CD8-positive, alpha-beta memory T cell (primary cell): ENCODE measurements at regions of chr22 and their contacts with region 1.

Region 1: GRCh38 chr22:21938071-21938822 is 14.4 kb downstream of the PPM1F start:
- DNase-seq: peak; percentile 83 to 91 (median 87)
- H3K4me3 ChIP-seq: peak overlapping the region; percentile 91
- H3K4me3 Mint-ChIP-seq: peak overlapping the region; percentile 83 to 92 (median 87)
- H3K27ac ChIP-seq: peak overlapping the region; percentile 88
- H3K27ac Mint-ChIP-seq: peak overlapping the region; percentile 78 to 97 (median 86)
- H3K4me1 ChIP-seq: peaks cover 16% of the 10 kb centered on the region
- H3K4me1 Mint-ChIP-seq: peaks cover 24 to 40% (median 27%) of the 10 kb centered on the region in 3 donors
- H3K27me3 ChIP-seq: no peaks in the 10 kb centered on the region
- H3K27me3 Mint-ChIP-seq: peaks cover 0 to 3% of the 10 kb centered on the region in 2 donors

Region 2: DNA sequence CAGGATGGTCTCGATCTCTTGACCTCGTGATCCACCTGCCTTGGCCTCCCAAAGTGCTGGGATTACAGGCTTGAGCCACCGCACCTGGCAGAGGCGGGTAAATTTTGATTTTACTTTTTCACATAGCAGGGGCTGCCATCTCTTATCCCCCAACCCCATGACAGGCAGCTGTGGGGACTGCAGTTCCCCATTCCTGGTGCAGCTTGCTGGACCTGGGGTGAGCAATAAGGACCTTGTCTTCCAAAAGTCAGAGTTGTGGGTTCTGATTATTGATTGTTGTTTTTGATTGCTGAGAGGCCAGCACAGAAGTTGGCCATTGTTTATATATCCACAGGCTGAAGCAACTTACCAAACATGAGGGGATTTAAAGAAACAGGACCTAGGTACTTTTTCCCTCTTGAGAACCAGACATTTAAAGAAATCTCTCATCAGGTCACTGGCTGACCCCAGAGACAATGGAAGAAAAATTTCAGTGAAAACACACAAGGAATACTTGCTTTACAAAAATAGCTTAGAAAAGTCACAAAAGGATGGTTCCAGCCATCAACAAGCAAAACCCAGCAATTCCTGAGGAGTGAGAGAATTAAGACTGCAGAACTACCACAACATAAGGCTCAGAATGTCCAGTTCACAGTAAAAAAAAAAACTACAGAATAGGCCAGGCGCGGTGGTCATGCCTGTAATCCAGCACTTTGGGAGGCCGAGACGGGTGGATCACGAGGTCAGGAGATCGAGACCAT is 48.8 kb before region 1 on chr22:
- CTCF ChIA-PET with region 1: no interaction called
- POLR2A ChIA-PET with region 1: no interaction called
- DNase-seq: no peak
- H3K4me3 ChIP-seq: no peak overlapping the region
- H3K4me3 Mint-ChIP-seq: no peak overlapping the region
- H3K27ac ChIP-seq: no peak overlapping the region
- H3K27ac Mint-ChIP-seq: peak overlapping the region in 1 of 8 donors; percentile 87
- H3K4me1 ChIP-seq: no peaks in the 10 kb centered on the region
- H3K4me1 Mint-ChIP-seq: no peaks in the 10 kb centered on the region
- H3K27me3 ChIP-seq: no peaks in the 10 kb centered on the region
- H3K27me3 Mint-ChIP-seq: peaks cover 0 to 3% of the 10 kb centered on the region in 2 donors

Region 3: DNA sequence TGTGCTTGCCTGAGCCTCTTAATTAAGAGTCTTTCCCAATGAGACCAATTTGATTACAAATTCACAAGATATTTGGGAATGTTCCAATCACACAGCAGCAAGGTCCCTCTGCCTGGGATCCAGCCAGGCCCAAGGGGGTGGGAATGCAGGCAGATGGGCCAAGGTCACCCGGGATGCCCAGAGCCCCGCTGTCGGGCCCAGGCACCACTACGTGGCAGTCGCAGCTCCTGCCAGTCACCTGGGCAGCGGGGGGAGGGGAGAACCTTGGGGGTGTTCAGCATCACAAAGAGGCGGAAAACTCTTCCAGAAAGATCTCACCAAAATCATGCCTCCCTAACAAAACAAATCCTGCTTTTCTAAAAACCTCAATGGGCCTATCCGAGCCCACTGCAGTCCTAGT is 16.5 kb before region 1 on chr22:
- CTCF ChIA-PET with region 1: interaction called, 15 read pairs
- POLR2A ChIA-PET with region 1: interaction called, 5 read pairs
- DNase-seq: no peak
- H3K4me3 ChIP-seq: no peak overlapping the region
- H3K4me3 Mint-ChIP-seq: no peak overlapping the region
- H3K27ac ChIP-seq: no peak overlapping the region
- H3K27ac Mint-ChIP-seq: no peak overlapping the region
- H3K4me1 ChIP-seq: no peaks in the 10 kb centered on the region
- H3K4me1 Mint-ChIP-seq: no peaks in the 10 kb centered on the region
- H3K27me3 ChIP-seq: no peaks in the 10 kb centered on the region
- H3K27me3 Mint-ChIP-seq: no peaks in the 10 kb centered on the region

Region 4: DNA sequence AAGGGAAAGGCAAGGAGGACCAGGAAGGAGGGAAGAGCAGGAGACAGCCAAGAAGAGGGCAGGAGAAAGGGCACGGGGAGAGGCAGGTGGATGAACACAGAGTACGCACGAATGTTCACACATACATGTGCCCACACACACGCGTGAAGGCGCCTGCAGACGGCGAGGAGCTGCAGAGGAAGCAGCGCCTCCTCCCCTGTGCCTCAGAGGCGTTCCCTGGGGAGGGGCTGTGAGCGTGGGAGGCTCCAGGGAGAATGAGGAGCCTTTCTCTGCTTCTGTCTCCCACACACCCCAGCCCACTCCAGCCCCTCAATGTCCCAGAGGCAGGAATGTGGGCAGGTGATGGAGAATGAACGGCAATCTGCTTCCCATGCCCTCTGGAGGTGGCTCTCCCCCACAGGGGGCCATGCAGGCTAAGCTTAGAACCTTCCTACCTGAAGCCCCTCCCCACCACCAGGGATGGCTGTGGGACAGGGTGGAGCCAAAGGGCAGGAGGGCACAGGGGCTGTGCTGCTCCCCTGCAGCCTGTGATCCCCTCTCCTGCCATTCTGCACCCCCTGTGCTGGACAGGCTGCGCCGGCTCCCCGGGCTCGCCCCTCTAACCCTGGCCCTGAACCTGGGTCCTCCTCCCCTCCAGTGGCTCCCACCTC is 10.9 kb before region 1 on chr22:
- CTCF ChIA-PET with region 1: interaction called, 15 read pairs
- POLR2A ChIA-PET with region 1: no interaction called
- DNase-seq: no peak
- H3K4me3 ChIP-seq: no peak overlapping the region
- H3K4me3 Mint-ChIP-seq: no peak overlapping the region
- H3K27ac ChIP-seq: no peak overlapping the region
- H3K27ac Mint-ChIP-seq: no peak overlapping the region
- H3K4me1 ChIP-seq: no peaks in the 10 kb centered on the region
- H3K4me1 Mint-ChIP-seq: no peaks in the 10 kb centered on the region
- H3K27me3 ChIP-seq: no peaks in the 10 kb centered on the region
- H3K27me3 Mint-ChIP-seq: no peaks in the 10 kb centered on the region

Region 5: DNA sequence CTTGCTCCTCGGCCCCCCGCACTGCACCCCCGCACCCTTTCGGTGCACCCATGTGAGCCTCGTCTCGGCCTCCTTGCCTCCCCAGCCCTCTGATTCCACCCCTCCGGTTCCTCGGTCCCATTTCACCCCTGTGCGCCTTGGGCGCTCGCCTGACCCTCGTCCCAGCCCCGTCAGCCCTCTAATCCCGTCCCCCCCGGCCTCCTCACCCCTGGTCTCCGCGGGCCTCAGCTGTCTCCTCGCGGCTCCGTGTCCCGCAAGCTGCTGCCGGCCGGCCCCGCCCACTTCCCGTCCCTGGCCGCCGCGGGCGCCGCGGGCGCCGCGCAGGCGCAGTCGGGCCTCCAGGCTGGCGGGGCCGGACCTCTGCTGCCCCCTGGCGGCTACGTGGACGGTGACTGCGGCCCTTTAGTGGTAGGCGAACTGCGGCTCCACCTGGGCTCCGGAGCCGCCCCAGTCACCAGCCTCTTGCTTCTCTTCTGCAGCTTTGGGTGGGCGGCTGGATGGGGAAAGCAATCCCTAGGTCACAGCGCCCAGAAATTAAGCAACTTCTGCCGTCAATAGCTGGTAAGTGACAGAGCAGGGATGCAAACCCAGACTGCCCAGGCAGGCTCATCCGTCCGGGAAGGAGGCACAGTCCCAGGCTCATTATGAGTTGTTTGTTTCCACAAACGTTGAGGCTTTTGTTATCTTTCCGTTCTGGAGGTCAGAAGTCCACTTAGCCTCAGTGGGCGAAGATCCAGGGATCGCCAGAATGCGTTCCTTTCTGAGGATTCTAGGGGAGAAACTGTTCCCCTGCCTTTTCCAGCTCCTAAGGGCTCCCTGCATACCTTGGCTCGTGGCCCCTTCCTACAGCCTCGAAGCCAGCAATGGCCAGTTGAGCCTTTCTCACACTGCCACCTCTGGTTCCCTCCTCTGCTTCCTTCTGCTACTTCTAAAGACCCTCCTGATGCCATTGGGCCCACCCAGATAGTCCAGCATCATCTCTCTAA is 14.6 kb after region 1 on chr22 and contains the start of gene PPM1F:
- CTCF ChIA-PET with region 1: interaction called, 100 read pairs
- POLR2A ChIA-PET with region 1: interaction called, 7 read pairs
- DNase-seq: peak; percentile 86 to 92 (median 90)
- H3K4me3 ChIP-seq: peak within 1 kb of the TSS; percentile 66
- H3K4me3 Mint-ChIP-seq: peak within 1 kb of the TSS; percentile 82 to 93 (median 87)
- H3K27ac ChIP-seq: peak within 1 kb of the TSS; percentile 80
- H3K27ac Mint-ChIP-seq: peak within 1 kb of the TSS in 5 of 8 donors; percentile 36 to 77 (median 58)
- H3K4me1 ChIP-seq: peaks cover 12% of the 10 kb centered on the region
- H3K4me1 Mint-ChIP-seq: peaks cover 14 to 20% (median 16%) of the 10 kb centered on the region in 3 donors
- H3K27me3 ChIP-seq: no peaks in the 10 kb centered on the region
- H3K27me3 Mint-ChIP-seq: peaks cover 0 to 1% of the 10 kb centered on the region in 2 donors
- total RNA-seq, gene PPM1F: 25.4 to 29.1 TPM